BJ (cell line): ENCODE measurements at regions of chr5 and their contacts with region 1.

Region 1: GRCh38 chr5:107571621-107572536 is 98.9 kb downstream of the EFNA5 start:
- DNase-seq: peak; percentile 43
- H3K4me3 ChIP-seq: peak overlapping the region; percentile 33
- H3K27me3 ChIP-seq: peaks cover 3% of the 10 kb centered on the region; the same call in 1 of the 2 replicates
- CTCF ChIP-seq: peak; percentile 96

Region 2: DNA sequence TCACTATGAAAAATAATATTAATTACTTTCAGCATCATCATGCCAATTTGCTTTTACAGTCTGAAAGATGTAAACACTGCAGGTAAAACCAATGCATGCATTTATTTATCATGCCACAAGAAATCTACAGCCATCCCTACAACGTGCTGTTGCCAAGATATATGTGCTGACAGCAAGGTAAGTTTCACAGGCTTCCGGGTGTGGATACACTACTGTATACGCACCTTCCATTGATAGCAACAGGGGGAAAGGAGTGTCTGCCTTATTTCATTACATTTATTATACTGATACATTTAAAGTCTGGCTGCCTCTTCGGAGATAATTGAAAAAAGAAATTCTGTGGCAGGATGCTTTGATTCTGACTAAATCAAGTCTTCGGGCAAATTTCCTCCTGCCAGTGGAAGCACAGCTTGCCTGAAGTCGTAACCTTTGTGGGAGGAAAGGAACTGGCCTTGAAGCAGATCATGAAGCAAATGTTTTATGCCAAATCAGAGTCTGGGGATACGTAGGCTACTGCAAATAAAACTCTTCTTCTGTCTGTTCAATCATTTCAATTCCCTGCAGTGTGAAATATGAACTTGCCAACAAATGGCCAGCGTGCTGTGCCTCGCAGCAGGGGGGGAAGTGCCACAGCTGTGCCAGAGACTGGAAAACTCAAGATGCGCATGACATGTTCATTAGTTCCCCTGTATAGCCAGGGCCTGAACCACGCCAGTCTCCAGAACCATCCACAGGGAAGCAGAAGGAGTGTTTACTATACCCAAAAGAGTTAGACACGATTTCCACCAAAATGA is 169.2 kb before region 1 on chr5:
- CTCF ChIA-PET with region 1: no interaction called
- POLR2A ChIA-PET with region 1: no interaction called
- DNase-seq: no peak
- H3K4me3 ChIP-seq: no peak overlapping the region
- H3K27me3 ChIP-seq: no peaks in the 10 kb centered on the region; the same call in 1 of the 2 replicates
- CTCF ChIP-seq: no peak

Region 3: DNA sequence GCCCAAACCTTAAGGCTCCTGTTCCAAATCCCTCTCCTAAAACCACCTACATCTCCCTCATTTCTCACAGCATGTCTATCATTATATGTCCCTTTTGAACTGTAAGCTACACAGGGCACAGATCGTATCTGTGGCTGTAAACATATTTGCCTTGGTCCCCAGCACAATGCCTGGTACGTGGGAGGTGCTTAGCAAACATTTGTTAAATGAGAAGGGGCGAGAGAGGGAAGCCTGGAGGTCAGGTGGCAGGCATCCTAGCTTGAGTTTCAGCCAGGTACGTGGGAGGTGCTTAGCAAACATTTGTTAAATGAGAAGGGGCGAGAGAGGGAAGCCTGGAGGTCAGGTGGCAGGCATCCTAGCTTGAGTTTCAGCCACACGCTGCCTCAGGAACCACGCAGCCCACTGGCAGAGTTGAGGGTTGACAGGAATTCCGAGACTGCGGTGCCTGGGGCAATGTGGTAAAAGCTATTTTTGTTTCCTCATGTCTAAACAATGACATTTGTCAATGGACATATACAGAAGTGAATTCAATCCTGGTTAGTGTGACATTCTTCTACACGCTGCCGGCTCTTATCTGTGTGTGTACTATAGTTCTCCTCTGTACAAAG is 14.7 kb before region 1 on chr5:
- CTCF ChIA-PET with region 1: interaction called, 33 read pairs
- POLR2A ChIA-PET with region 1: no interaction called
- DNase-seq: no peak
- H3K4me3 ChIP-seq: no peak overlapping the region
- H3K27me3 ChIP-seq: no peaks in the 10 kb centered on the region
- CTCF ChIP-seq: no peak